Dendritic cell treated with granulocyte-macrophage colony-stimulating factor and Interleukin-4, amounts not matched to agents 40 ng/mL and 50 ng/mL, for 4 days (primary cell): ENCODE measurements at regions of chr9 and their contacts with region 1.

Region 1: DNA sequence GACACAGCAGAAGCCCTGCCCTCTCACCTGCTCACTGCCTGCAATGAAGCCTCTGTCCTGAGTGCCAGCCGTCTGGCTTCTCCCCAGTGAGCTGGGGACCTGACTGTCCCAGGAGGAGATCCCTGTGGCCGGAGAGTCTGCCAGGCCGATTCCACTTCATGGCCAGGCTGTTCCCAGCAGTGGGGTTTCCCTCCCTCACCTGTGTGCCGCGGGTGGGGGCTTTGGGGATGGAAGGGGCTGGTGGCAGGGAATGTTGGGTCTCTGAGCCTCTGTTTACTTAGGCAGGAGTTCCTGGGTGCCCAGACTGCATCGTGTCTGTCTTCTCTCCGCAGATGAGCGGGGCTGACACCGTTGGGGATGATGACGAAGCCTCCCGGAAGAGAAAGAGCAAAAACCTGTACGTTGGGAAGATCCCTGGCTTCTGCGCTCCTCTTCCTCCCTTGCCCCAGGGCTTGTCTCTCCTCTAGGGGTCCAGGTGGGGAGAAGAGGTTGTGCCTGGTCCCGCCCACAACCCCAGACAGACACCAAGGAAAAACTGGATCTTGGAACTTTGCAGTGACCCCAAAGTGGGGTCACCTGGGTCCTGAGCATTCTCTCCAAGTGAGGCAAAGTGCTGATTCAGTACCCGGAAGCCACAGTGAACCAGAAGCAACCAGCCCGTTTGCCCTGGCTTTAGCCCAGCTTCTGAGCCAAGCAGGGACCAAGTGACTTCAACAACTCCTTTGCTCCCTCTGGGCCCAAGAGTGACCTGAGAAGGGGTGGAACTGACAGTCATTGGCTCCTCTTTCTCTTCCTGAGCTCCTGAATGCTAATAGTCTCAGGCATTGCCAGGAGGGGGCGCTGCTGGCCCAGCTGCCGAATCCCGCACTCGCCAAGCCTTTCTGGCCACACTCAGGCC is 127.7 kb downstream of the RGS3 start:
- H3K4me3 Mint-ChIP-seq: no peak overlapping the region
- H3K27ac Mint-ChIP-seq: no peak overlapping the region
- H3K4me1 Mint-ChIP-seq: peaks cover 70% of the 10 kb centered on the region
- H3K27me3 Mint-ChIP-seq: no peaks in the 10 kb centered on the region

Region 2: GRCh38 chr9:113401027-113401792 is 190.0 kb before region 1 on chr9 and contains the start of gene ALAD:
- intact Hi-C with region 1: loop called (anchors 5 kb)
- H3K4me3 Mint-ChIP-seq: peak within 1 kb of the TSS; percentile 98
- H3K27ac Mint-ChIP-seq: peak within 1 kb of the TSS; percentile 96
- H3K4me1 Mint-ChIP-seq: peaks cover 68% of the 10 kb centered on the region
- H3K27me3 Mint-ChIP-seq: no peaks in the 10 kb centered on the region

Region 3: DNA sequence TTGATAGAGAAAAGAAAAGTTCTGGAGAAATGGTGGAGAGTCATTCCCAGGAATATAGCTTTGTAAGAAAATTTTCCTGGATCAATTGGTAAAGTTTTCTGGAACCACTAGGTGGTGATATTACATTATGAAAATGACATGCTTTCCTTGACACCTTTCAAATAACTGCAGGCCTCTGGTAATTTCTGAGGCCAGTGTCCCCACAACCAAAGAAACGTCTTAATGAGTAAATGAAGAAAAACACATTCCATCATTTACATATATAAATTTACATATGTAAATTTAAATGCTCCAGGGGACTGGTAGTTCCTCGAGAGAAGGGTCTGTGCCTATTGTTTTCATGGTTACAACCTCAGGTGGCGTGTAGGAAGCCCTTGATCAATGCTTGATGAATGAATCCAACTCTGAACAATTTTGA is 144.9 kb before region 1 on chr9:
- intact Hi-C with region 1: loop called (anchors 2 kb)
- H3K4me3 Mint-ChIP-seq: no peak overlapping the region
- H3K27ac Mint-ChIP-seq: no peak overlapping the region
- H3K4me1 Mint-ChIP-seq: no peaks in the 10 kb centered on the region
- H3K27me3 Mint-ChIP-seq: no peaks in the 10 kb centered on the region

Region 4: DNA sequence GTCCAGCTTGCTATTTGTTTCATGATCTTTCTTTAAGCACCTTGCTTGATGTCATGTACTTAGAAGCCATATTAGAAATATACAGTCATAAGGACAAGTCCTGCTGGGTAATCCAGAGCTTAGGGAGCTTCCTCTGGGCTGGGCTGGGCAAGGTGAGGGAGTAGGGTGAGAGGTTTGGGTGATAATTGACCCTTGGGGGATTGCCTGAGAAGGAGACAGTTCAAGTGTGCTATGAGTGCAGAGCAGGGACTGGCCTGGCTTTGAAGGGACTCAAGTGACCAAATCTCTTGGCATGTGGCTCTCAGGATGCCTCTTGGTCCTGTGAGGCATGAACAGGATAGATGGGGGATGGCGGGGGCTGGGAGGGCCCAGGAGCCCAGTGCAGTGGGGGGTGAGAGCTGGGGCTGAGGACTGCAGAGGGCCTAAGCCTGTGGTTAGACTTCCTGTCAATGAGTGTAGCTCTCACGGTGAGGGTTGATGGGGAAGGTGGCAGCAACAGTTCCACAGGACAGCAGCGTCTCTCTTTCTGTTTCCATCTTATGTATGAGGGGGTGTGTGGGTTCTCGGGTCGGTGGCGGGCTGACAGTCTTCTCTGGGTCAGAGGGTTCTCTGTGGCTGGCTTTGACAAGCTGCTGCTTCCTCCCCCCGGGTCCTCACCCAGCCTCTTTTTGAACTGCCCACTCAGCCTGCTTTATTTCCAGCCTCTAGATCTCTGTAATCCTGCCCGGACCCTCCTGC is 74.2 kb before region 1 on chr9:
- intact Hi-C with region 1: no loop called
- H3K4me3 Mint-ChIP-seq: no peak overlapping the region
- H3K27ac Mint-ChIP-seq: peak overlapping the region; percentile 10
- H3K4me1 Mint-ChIP-seq: peaks cover 58% of the 10 kb centered on the region
- H3K27me3 Mint-ChIP-seq: peaks cover 19% of the 10 kb centered on the region

Region 5: GRCh38 chr9:113657703-113658544 is 66.7 kb after region 1 on chr9:
- intact Hi-C with region 1: loop called (anchors 1 kb)
- H3K4me3 Mint-ChIP-seq: no peak overlapping the region
- H3K27ac Mint-ChIP-seq: no peak overlapping the region
- H3K4me1 Mint-ChIP-seq: peaks cover 23% of the 10 kb centered on the region
- H3K27me3 Mint-ChIP-seq: peaks cover 26% of the 10 kb centered on the region